ENCODE measurements at regions of chr19 and their contacts with region 1.

Region 1: GRCh38 chr19:58558623-58559274 is 338 bp upstream of the UBE2M start:
- DNase-seq: peak; percentile 97 to 100
- H3K4me3 ChIP-seq: peak overlapping the region; percentile 76 to 97 (median 86)
- H3K27ac ChIP-seq: peak overlapping the region; percentile 98
- H3K4me1 ChIP-seq: peaks cover 0 to 45% (median 22%) of the 10 kb centered on the region in 4 experiments; a peak in 6 of 7 replicates
- H3K27me3 ChIP-seq: peaks cover 0 to 14% (median 5%) of the 10 kb centered on the region in 4 experiments; a peak in 4 of 7 replicates
- CTCF ChIP-seq: no peak
- EP300 ChIP-seq: no peak
- POLR2A ChIP-seq: peak in 1 of 2 experiments; percentile 78; a peak in 2 of 3 replicates
- RAD21 ChIP-seq: no peak

Region 2: GRCh38 chr19:58531034-58531840 is 27.5 kb before region 1 on chr19:
- CTCF ChIA-PET with region 1: interaction called, 3 read pairs
- POLR2A ChIA-PET with region 1: interaction called, 650 read pairs
- DNase-seq: no peak
- H3K4me3 ChIP-seq: no peak overlapping the region
- H3K27ac ChIP-seq: no peak overlapping the region
- H3K4me1 ChIP-seq: no peaks in the 10 kb centered on the region
- H3K27me3 ChIP-seq: peaks cover 0 to 4% (median 0%) of the 10 kb centered on the region in 4 experiments; a peak in 1 of 7 replicates
- CTCF ChIP-seq: no peak
- EP300 ChIP-seq: no peak
- POLR2A ChIP-seq: no peak
- RAD21 ChIP-seq: no peak

Region 3: GRCh38 chr19:58538257-58539168 is 20.2 kb before region 1 on chr19:
- CTCF ChIA-PET with region 1: interaction called, 5 read pairs
- POLR2A ChIA-PET with region 1: interaction called, 434 read pairs
- DNase-seq: peak in 1 of 2 experiments; percentile 88
- H3K4me3 ChIP-seq: peak overlapping the region; percentile 17 to 52 (median 32)
- H3K27ac ChIP-seq: peak overlapping the region; percentile 85
- H3K4me1 ChIP-seq: peaks cover 0 to 5% (median 4%) of the 10 kb centered on the region in 4 experiments; a peak in 5 of 7 replicates
- H3K27me3 ChIP-seq: peaks cover 0 to 24% (median 10%) of the 10 kb centered on the region in 4 experiments; a peak in 5 of 7 replicates
- CTCF ChIP-seq: no peak
- EP300 ChIP-seq: no peak
- POLR2A ChIP-seq: peak; percentile 78 to 89
- RAD21 ChIP-seq: no peak

Region 4: DNA sequence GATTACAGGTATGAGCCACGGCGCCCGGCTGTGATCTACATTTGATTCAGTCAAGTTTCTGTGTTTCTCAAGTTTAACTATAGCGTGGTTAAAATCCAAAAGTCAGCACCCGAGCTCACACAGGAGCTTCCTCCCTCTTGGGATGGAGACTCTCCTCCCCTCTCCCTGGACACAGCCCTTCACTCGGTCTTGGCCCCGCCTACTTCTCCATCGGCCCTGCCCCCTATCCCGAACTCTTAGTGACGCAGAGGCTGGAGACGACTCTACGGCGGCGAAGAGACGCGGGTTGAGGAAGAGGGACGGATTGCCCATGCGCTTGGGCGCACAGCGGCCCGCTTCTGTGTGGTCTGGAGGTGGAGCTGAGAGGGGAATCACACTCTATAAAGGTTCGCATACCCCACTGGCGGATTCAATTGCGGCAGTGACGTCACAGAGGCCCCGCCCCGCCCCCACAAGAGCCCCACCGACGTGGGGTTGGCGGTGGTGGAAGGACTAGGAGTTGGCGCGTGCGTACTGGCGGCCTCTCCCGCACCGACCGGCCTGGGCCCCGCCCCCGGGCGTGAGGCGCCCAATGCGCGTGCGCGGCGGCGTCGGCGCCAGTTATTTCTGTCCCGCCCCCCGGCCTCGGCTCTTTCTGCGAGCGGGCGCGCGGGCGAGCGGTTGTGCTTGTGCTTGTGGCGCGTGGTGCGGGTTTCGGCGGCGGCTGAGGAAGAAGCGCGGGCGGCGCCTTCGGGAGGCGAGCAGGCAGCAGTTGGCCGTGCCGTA is 14.7 kb before region 1 on chr19 and contains the start of gene TRIM28:
- CTCF ChIA-PET with region 1: interaction called, 9 read pairs
- POLR2A ChIA-PET with region 1: interaction called, 434 read pairs
- DNase-seq: peak; percentile 91 to 99
- H3K4me3 ChIP-seq: peak within 1 kb of the TSS; percentile 89 to 100 (median 94)
- H3K27ac ChIP-seq: peak within 1 kb of the TSS; percentile 96
- H3K4me1 ChIP-seq: peaks cover 3 to 10% (median 5%) of the 10 kb centered on the region in 4 experiments; a peak in 6 of 7 replicates
- H3K27me3 ChIP-seq: peaks cover 0 to 24% (median 10%) of the 10 kb centered on the region in 4 experiments; a peak in 5 of 7 replicates
- CTCF ChIP-seq: no peak
- EP300 ChIP-seq: 0 out of 3 replicates have a peak, but pooled peaks of 1 of the 2 experiments have one; percentile 1
- POLR2A ChIP-seq: peak; percentile 93 to 95
- RAD21 ChIP-seq: no peak
- total RNA-seq, gene TRIM28: 1,398 and 1,433 TPM in 2 replicates

Region 5: GRCh38 chr19:58572818-58573657 is 14.3 kb after region 1 on chr19 and contains the start of gene MZF1:
- CTCF ChIA-PET with region 1: interaction called, 7 read pairs
- POLR2A ChIA-PET with region 1: interaction called, 434 read pairs
- DNase-seq: peak; percentile 99 to 100
- H3K4me3 ChIP-seq: peak within 1 kb of the TSS; percentile 70 to 87 (median 78)
- H3K27ac ChIP-seq: peak within 1 kb of the TSS; percentile 98
- H3K4me1 ChIP-seq: peaks cover 0 to 11% (median 1%) of the 10 kb centered on the region in 4 experiments; a peak in 3 of 7 replicates
- H3K27me3 ChIP-seq: no peaks in the 10 kb centered on the region
- CTCF ChIP-seq: peak in 2 of 3 experiments; percentile 16 to 17; a peak in 2 of 4 replicates
- EP300 ChIP-seq: no peak
- POLR2A ChIP-seq: peak; percentile 2 to 77
- RAD21 ChIP-seq: no peak
- total RNA-seq, gene MZF1: 15.2 and 15.5 TPM in 2 replicates

Region 6: GRCh38 chr19:58581227-58582151 is 22.7 kb after region 1 on chr19:
- CTCF ChIA-PET with region 1: interaction called, 24 read pairs
- POLR2A ChIA-PET with region 1: interaction called, 19 read pairs
- DNase-seq: peak; percentile 92 to 99
- H3K4me3 ChIP-seq: no peak overlapping the region
- H3K27ac ChIP-seq: no peak overlapping the region
- H3K4me1 ChIP-seq: peaks cover 0 to 6% (median 0%) of the 10 kb centered on the region in 4 experiments; a peak in 3 of 7 replicates
- H3K27me3 ChIP-seq: no peaks in the 10 kb centered on the region
- CTCF ChIP-seq: peak; percentile 99 to 100 (median 99)
- EP300 ChIP-seq: no peak; a peak in 1 of 3 replicates
- POLR2A ChIP-seq: no peak
- RAD21 ChIP-seq: peak; percentile 90 to 93

Measured in H1 (cell line).